ENCODE measurements at regions of chr3 and their contacts with region 1.

Region 1: DNA sequence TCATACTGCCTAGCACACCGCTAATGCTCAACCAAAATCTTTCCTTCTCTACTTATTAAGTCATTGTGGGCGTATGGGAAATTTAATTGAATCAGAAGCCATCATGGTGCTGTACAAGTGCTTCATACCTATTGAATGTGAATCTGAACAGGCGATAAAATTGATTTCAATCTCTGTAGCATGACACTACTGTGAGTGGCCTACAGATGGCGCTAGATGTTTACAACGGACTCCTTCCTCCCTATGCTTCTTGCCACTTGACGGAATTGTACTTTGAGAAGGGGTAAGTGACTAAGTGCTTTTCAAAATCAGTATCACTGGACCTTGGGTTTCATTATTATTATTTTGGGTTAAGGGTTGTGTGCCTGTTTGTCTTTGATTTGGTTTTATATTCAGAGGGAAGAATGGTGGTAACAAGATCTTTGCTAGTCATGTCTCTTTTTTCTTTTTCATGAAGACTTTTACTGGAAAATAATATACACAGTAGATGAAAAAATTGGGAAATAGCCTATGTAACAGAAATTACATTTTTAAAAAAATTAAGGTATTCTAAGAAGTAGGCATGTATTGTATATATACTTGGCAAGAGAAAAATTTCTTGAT is 35.4 kb downstream of the ACP3 start:
- DNase-seq: peak; percentile 73
- ATAC-seq: peak; percentile 82
- H3K4me3 ChIP-seq: no peak overlapping the region
- H3K4me3 Mint-ChIP-seq: no peak overlapping the region
- H3K27ac ChIP-seq: no peak overlapping the region
- H3K27ac Mint-ChIP-seq: no peak overlapping the region
- H3K4me1 ChIP-seq: no peaks in the 10 kb centered on the region
- H3K4me1 Mint-ChIP-seq: no peaks in the 10 kb centered on the region
- H3K27me3 ChIP-seq: peaks cover 0 to 7% (median 0%) of the 10 kb centered on the region in 4 experiments
- H3K27me3 Mint-ChIP-seq: no peaks in the 10 kb centered on the region
- CTCF ChIP-seq: peak; percentile 98

Region 2: GRCh38 chr3:132399054-132399929 is 46.6 kb after region 1 on chr3:
- CTCF ChIA-PET with region 1: interaction called, 40 read pairs
- POLR2A ChIA-PET with region 1: no interaction called
- intact Hi-C with region 1: loop called (anchors 1 kb)
- DNase-seq: peak; percentile 52
- ATAC-seq: no peak
- H3K4me3 ChIP-seq: no peak overlapping the region
- H3K4me3 Mint-ChIP-seq: no peak overlapping the region
- H3K27ac ChIP-seq: no peak overlapping the region
- H3K27ac Mint-ChIP-seq: no peak overlapping the region
- H3K4me1 ChIP-seq: no peaks in the 10 kb centered on the region
- H3K4me1 Mint-ChIP-seq: peaks cover 2% of the 10 kb centered on the region
- H3K27me3 ChIP-seq: no peaks in the 10 kb centered on the region
- H3K27me3 Mint-ChIP-seq: no peaks in the 10 kb centered on the region
- CTCF ChIP-seq: peak; percentile 83

Region 3: DNA sequence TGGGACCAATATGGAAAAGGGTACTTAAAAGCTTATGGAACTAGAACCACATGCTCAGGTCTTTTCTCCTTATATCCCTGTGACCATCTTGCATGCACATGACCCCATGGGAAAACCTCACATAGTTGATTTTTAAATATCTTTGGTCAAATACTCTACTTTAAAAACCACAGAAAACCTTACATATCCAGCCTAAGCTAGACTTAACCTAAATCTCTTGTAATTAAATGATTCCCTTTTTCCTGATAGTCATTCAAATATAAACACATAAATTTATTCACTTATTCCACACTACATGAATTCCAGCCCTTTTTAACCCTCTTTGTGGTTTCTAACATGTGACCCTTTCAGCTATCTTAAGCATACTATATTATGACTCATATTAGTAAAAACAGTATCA is 111.4 kb after region 1 on chr3:
- CTCF ChIA-PET with region 1: no interaction called
- POLR2A ChIA-PET with region 1: no interaction called
- intact Hi-C with region 1: loop called (anchors 10 kb)
- DNase-seq: no peak
- ATAC-seq: no peak
- H3K4me3 ChIP-seq: no peak overlapping the region
- H3K4me3 Mint-ChIP-seq: no peak overlapping the region
- H3K27ac ChIP-seq: no peak overlapping the region
- H3K27ac Mint-ChIP-seq: no peak overlapping the region
- H3K4me1 ChIP-seq: no peaks in the 10 kb centered on the region
- H3K4me1 Mint-ChIP-seq: no peaks in the 10 kb centered on the region
- H3K27me3 ChIP-seq: no peaks in the 10 kb centered on the region
- H3K27me3 Mint-ChIP-seq: no peaks in the 10 kb centered on the region
- CTCF ChIP-seq: no peak

Region 4: GRCh38 chr3:132499071-132499470 is 146.4 kb after region 1 on chr3:
- CTCF ChIA-PET with region 1: no interaction called
- POLR2A ChIA-PET with region 1: no interaction called
- intact Hi-C with region 1: loop called (anchors 10 kb)
- DNase-seq: no peak
- ATAC-seq: no peak
- H3K4me3 ChIP-seq: no peak overlapping the region
- H3K4me3 Mint-ChIP-seq: no peak overlapping the region
- H3K27ac ChIP-seq: no peak overlapping the region
- H3K27ac Mint-ChIP-seq: no peak overlapping the region
- H3K4me1 ChIP-seq: no peaks in the 10 kb centered on the region
- H3K4me1 Mint-ChIP-seq: no peaks in the 10 kb centered on the region
- H3K27me3 ChIP-seq: no peaks in the 10 kb centered on the region
- H3K27me3 Mint-ChIP-seq: no peaks in the 10 kb centered on the region
- CTCF ChIP-seq: no peak

Region 5: GRCh38 chr3:132641837-132642538 is 289.3 kb after region 1 on chr3:
- CTCF ChIA-PET with region 1: interaction called, 47 read pairs
- POLR2A ChIA-PET with region 1: no interaction called
- intact Hi-C with region 1: loop called (anchors 1 kb)
- DNase-seq: peak; percentile 54
- ATAC-seq: no peak
- H3K4me3 ChIP-seq: no peak overlapping the region
- H3K4me3 Mint-ChIP-seq: no peak overlapping the region
- H3K27ac ChIP-seq: no peak overlapping the region
- H3K27ac Mint-ChIP-seq: no peak overlapping the region
- H3K4me1 ChIP-seq: no peaks in the 10 kb centered on the region
- H3K4me1 Mint-ChIP-seq: peaks cover 2% of the 10 kb centered on the region
- H3K27me3 ChIP-seq: no peaks in the 10 kb centered on the region
- H3K27me3 Mint-ChIP-seq: no peaks in the 10 kb centered on the region
- CTCF ChIP-seq: peak; percentile 89

Region 6: DNA sequence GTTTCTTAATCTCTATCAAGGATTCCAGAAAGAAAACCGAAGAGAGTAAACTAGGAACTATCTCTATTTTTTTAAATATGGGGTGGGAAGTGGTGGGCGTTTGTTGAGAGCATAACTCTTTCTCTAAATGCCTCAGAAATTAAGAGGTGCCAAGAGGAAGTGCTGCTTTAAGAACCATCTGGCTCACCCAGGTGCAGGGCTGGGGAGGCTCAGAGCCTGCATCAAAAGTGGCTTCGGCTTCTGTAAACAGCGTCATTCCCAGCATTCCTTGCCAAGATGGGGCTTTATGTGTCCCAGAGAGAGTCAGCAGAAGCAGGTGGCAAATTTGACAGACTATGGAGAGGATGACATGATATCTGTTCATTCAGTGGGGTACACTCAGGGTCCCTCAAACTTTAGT is 924.0 kb after region 1 on chr3:
- CTCF ChIA-PET with region 1: no interaction called
- POLR2A ChIA-PET with region 1: no interaction called
- intact Hi-C with region 1: no loop called
- DNase-seq: no peak
- ATAC-seq: no peak
- H3K4me3 ChIP-seq: no peak overlapping the region
- H3K4me3 Mint-ChIP-seq: no peak overlapping the region
- H3K27ac ChIP-seq: no peak overlapping the region
- H3K27ac Mint-ChIP-seq: no peak overlapping the region
- H3K4me1 ChIP-seq: peaks cover 0 to 3% of the 10 kb centered on the region in 2 donors
- H3K4me1 Mint-ChIP-seq: peaks cover 2% of the 10 kb centered on the region
- H3K27me3 ChIP-seq: peaks cover 0 to 5% (median 0%) of the 10 kb centered on the region in 4 experiments
- H3K27me3 Mint-ChIP-seq: peaks cover 30% of the 10 kb centered on the region
- CTCF ChIP-seq: no peak